ENCODE measurements at regions of chr17 and their contacts with region 1.

Region 1: GRCh38 chr17:50170662-50171370 is 5.0 kb downstream of the SGCA start:
- DNase-seq: no peak
- H3K4me3 ChIP-seq: no peak overlapping the region
- H3K27ac ChIP-seq: no peak overlapping the region
- H3K4me1 ChIP-seq: peaks cover 17% of the 10 kb centered on the region
- H3K27me3 ChIP-seq: no peaks in the 10 kb centered on the region

Region 2: GRCh38 chr17:50213026-50214022 is 42.5 kb after region 1 on chr17:
- in situ Hi-C with region 1: no loop called
- DNase-seq: peak; percentile 40
- H3K4me3 ChIP-seq: no peak overlapping the region
- H3K27ac ChIP-seq: peak overlapping the region; percentile 100; the same call in 1 of the 2 replicates
- H3K4me1 ChIP-seq: peaks cover 84% of the 10 kb centered on the region
- H3K27me3 ChIP-seq: no peaks in the 10 kb centered on the region

Region 3: DNA sequence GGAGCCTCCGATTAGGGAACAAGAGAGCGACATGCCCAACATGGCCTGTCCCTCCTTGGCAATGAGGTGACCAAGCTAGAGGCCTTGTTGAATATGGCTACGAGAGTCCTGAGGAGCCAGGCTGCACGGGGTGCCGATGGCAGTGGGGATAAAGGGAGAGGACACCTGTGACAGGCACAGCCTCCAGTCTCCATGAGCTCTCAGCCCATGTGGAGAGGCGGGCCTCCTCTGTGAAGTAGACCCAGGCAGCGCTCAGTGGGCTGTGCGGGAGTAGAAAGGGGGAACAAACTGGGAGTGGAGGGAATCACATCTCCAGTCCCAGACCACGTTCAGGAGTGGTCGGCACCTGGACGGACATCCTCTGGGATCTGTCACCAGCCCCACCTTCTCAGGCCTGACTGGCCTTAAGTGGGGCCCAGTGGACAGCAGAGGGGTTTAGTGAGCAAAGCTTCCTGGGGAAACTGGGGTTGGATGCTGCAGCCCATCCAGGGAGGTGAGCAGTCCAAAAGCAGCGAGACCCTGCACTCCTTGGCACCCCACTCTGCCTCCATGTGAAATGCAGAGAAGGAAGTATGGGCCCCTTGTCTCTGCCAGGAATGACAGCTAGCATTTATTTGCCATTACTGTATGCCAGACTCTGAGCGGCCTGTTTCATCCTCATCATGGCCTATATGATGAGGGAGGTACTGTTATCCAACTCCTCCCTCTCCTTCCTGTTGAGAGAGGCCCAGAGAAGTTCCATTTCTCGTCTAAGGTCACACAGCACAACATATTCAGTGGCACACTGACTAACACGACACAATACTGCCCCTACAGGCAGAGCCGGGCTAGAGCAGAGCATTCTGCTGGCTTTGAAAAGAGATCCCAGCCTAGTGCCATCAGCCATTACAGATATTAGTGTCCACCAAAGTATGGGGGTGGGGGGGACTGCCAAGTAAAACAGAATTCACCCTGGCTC is 98.9 kb after region 1 on chr17:
- in situ Hi-C with region 1: loop called (anchors 5 kb)
- DNase-seq: peak; percentile 88
- H3K4me3 ChIP-seq: peak overlapping the region; percentile 46
- H3K27ac ChIP-seq: peak overlapping the region; percentile 89
- H3K4me1 ChIP-seq: peaks cover 76% of the 10 kb centered on the region
- H3K27me3 ChIP-seq: no peaks in the 10 kb centered on the region